ENCODE measurements at regions of chr1 and their contacts with region 1.

Region 1: GRCh38 chr1:67760030-67760821 is 73.0 kb downstream of the GNG12 start:
- DNase-seq: peak; percentile 85
- H3K4me3 ChIP-seq: no peak overlapping the region
- H3K27ac ChIP-seq: peak overlapping the region; percentile 63 to 81 (median 76)
- H3K4me1 ChIP-seq: peaks cover 24 to 78% (median 38%) of the 10 kb centered on the region in 4 donors
- H3K27me3 ChIP-seq: no peaks in the 10 kb centered on the region
- CTCF ChIP-seq: peak; percentile 82 to 96 (median 86)
- EP300 ChIP-seq: no peak
- POLR2A ChIP-seq: peak; percentile 69

Region 2: GRCh38 chr1:67479146-67479891 is 280.9 kb before region 1 on chr1:
- in situ Hi-C with region 1: no loop called
- intact Hi-C with region 1: no loop called
- DNase-seq: no peak
- H3K4me3 ChIP-seq: no peak overlapping the region
- H3K27ac ChIP-seq: no peak overlapping the region
- H3K4me1 ChIP-seq: peaks cover 0 to 5% (median 2%) of the 10 kb centered on the region in 4 donors
- H3K27me3 ChIP-seq: no peaks in the 10 kb centered on the region
- CTCF ChIP-seq: no peak
- EP300 ChIP-seq: no peak
- POLR2A ChIP-seq: no peak

Region 3: GRCh38 chr1:67561704-67562113 is 198.5 kb before region 1 on chr1:
- in situ Hi-C with region 1: loop called in 2 of 4 experiments (anchors 10 kb)
- intact Hi-C with region 1: loop called (anchors 2 kb)
- DNase-seq: peak; percentile 97
- H3K4me3 ChIP-seq: no peak overlapping the region
- H3K27ac ChIP-seq: peak overlapping the region; percentile 28 to 31 (median 30)
- H3K4me1 ChIP-seq: peaks cover 0 to 24% (median 11%) of the 10 kb centered on the region in 4 donors
- H3K27me3 ChIP-seq: no peaks in the 10 kb centered on the region
- CTCF ChIP-seq: peak; percentile 79 to 94 (median 88)
- EP300 ChIP-seq: no peak
- POLR2A ChIP-seq: peak; percentile 10

Region 4: GRCh38 chr1:67824766-67825165 is 64.5 kb after region 1 on chr1:
- in situ Hi-C with region 1: loop called in 1 of 4 experiments (anchors 10 kb)
- intact Hi-C with region 1: no loop called
- DNase-seq: peak; percentile 73
- H3K4me3 ChIP-seq: no peak overlapping the region
- H3K27ac ChIP-seq: peak overlapping the region in 2 of 4 donors; percentile 46 to 57
- H3K4me1 ChIP-seq: peaks cover 6 to 88% (median 28%) of the 10 kb centered on the region in 4 donors
- H3K27me3 ChIP-seq: no peaks in the 10 kb centered on the region
- CTCF ChIP-seq: no peak
- EP300 ChIP-seq: no peak
- POLR2A ChIP-seq: peak; percentile 29

Region 5: DNA sequence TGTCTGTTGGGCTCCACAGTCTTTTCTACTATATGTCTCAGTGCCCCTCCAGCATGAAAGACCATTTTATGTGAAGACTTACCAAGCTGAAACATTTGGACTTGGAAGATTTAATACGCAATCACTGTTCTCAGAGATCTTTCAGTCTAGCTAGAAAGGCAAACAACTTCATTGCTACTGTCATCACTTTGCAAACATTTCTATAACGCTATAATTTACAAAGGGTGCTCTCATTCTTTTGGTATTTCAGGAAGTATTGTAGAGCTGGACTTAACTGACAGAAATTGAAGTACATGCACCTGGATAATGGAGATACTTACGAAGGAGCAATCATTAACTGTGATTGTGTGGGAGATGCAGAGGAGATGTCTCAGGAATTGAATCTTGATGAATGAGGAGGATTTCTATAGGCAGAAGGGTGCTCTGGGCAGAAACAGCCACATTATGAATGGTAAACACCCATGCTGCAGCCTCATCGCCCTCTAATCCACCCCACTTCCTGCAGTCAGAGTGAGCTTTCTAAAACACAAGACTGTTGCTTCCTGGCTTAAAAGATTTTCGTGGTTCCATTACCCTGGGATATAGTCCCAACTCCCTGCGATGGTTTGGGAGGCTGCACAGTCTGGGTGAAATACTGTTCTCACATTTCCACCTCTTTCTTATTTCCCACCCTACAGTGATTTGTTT is 148.2 kb after region 1 on chr1:
- in situ Hi-C with region 1: no loop called
- intact Hi-C with region 1: no loop called
- DNase-seq: no peak
- H3K4me3 ChIP-seq: no peak overlapping the region
- H3K27ac ChIP-seq: no peak overlapping the region
- H3K4me1 ChIP-seq: no peaks in the 10 kb centered on the region
- H3K27me3 ChIP-seq: no peaks in the 10 kb centered on the region
- CTCF ChIP-seq: no peak
- EP300 ChIP-seq: no peak
- POLR2A ChIP-seq: no peak

Region 6: GRCh38 chr1:68281946-68282615 is 521.9 kb after region 1 on chr1:
- in situ Hi-C with region 1: no loop called
- intact Hi-C with region 1: no loop called
- DNase-seq: no peak
- H3K4me3 ChIP-seq: no peak overlapping the region
- H3K27ac ChIP-seq: no peak overlapping the region
- H3K4me1 ChIP-seq: no peaks in the 10 kb centered on the region
- H3K27me3 ChIP-seq: no peaks in the 10 kb centered on the region
- CTCF ChIP-seq: no peak
- EP300 ChIP-seq: no peak
- POLR2A ChIP-seq: no peak

Measured in transverse colon (tissue), 4 donors.